ENCODE measurements at regions of chr3 and their contacts with region 1.

Region 1: DNA sequence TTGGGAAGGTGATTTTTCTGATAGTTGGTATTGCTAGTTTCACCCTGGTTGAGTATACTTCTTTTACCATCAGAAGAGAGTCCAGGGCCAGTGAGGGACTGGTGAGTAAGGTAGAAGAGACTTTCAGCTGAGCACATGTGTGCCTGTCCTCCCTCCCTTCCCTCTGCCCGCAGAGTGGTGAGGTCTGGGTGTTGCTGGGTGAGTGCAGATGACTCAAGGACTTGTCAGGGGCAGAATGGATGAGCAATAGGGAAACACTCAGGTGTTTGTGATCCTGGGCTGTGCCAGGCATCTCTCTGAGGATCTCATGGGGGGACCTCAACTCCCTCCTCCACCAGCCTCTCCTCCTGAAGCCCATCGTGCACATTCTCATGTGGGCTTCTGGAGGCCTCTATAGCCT is 76.0 kb upstream of the GSK3B start:
- DNase-seq: peak; percentile 99
- H3K4me3 ChIP-seq: no peak overlapping the region
- H3K27ac ChIP-seq: peak overlapping the region; percentile 87
- H3K4me1 ChIP-seq: peaks cover 37% of the 10 kb centered on the region
- H3K27me3 ChIP-seq: no peaks in the 10 kb centered on the region
- CTCF ChIP-seq: no peak

Region 2: GRCh38 chr3:120153091-120153692 is 17.0 kb before region 1 on chr3:
- CTCF ChIA-PET with region 1: no interaction called
- dilution Hi-C with region 1: no loop called
- in situ Hi-C with region 1: no loop called
- intact Hi-C with region 1: loop called (anchors 2 kb)
- DNase-seq: peak; percentile 96
- H3K4me3 ChIP-seq: no peak overlapping the region
- H3K27ac ChIP-seq: peak overlapping the region; percentile 97
- H3K4me1 ChIP-seq: peaks cover 30% of the 10 kb centered on the region
- H3K27me3 ChIP-seq: no peaks in the 10 kb centered on the region
- CTCF ChIP-seq: no peak

Region 3: DNA sequence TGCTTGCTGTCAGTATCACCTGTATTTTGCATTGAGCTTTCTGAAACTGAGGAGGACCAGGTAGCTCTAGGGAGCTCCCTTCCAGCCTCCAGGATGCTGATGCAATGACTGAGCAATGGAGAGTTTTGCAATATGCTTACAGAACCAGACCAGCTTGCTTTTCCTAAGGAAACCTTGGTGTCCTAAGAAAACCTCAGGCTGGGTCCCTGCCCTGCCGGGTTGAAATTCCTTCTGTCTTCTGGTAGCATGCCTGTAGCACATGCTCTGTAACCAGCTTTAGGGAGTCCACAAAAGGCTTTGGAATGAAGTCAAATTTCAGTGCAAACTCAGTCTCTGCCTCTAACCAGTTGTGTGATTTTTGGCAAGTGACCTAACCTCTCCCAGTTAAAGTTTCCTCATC is 10.2 kb before region 1 on chr3:
- CTCF ChIA-PET with region 1: no interaction called
- dilution Hi-C with region 1: no loop called
- in situ Hi-C with region 1: no loop called
- intact Hi-C with region 1: loop called (anchors 1 kb)
- DNase-seq: peak; percentile 99
- H3K4me3 ChIP-seq: no peak overlapping the region
- H3K27ac ChIP-seq: peak overlapping the region; percentile 92
- H3K4me1 ChIP-seq: peaks cover 36% of the 10 kb centered on the region
- H3K27me3 ChIP-seq: no peaks in the 10 kb centered on the region
- CTCF ChIP-seq: no peak

Measured in mammary epithelial cell (primary cell).